Naive thymus-derived CD4-positive, alpha-beta T cell (primary cell): ENCODE measurements at regions of chr3 and their contacts with region 1.

Region 1: GRCh38 chr3:16482770-16483531 is 30.5 kb downstream of the RFTN1 start:
- DNase-seq: peak in 8 of 9 donors; percentile 14 to 49 (median 43)
- ATAC-seq: peak; percentile 87
- H3K4me3 ChIP-seq: no peak overlapping the region
- H3K4me3 Mint-ChIP-seq: peak overlapping the region; percentile 61 to 90 (median 76)
- H3K27ac ChIP-seq: peak overlapping the region; percentile 72
- H3K27ac Mint-ChIP-seq: peak overlapping the region; percentile 80 to 99 (median 91)
- H3K4me1 ChIP-seq: peaks cover 27 to 61% of the 10 kb centered on the region in 2 donors
- H3K4me1 Mint-ChIP-seq: peaks cover 47 to 88% (median 80%) of the 10 kb centered on the region in 7 donors
- H3K27me3 ChIP-seq: no peaks in the 10 kb centered on the region
- H3K27me3 Mint-ChIP-seq: no peaks in the 10 kb centered on the region

Region 2: GRCh38 chr3:16378920-16379319 is 104.0 kb before region 1 on chr3:
- CTCF ChIA-PET with region 1: no interaction called
- POLR2A ChIA-PET with region 1: interaction called, 4 read pairs
- intact Hi-C with region 1: loop called in 1 of 2 experiments (anchors 5 kb)
- DNase-seq: no peak
- ATAC-seq: peak; percentile 19
- H3K4me3 ChIP-seq: no peak overlapping the region
- H3K4me3 Mint-ChIP-seq: peak overlapping the region in 8 of 10 donors; percentile 26 to 85 (median 42)
- H3K27ac ChIP-seq: no peak overlapping the region
- H3K27ac Mint-ChIP-seq: peak overlapping the region in 8 of 9 donors; percentile 54 to 94 (median 90)
- H3K4me1 ChIP-seq: peaks cover 28 to 60% of the 10 kb centered on the region in 2 donors
- H3K4me1 Mint-ChIP-seq: peaks cover 52 to 98% (median 87%) of the 10 kb centered on the region in 7 donors
- H3K27me3 ChIP-seq: no peaks in the 10 kb centered on the region
- H3K27me3 Mint-ChIP-seq: no peaks in the 10 kb centered on the region

Region 3: GRCh38 chr3:16467393-16467792 is 15.6 kb before region 1 on chr3:
- CTCF ChIA-PET with region 1: no interaction called
- POLR2A ChIA-PET with region 1: interaction called, 5 read pairs
- intact Hi-C with region 1: loop called (anchors 1 kb)
- DNase-seq: peak in 8 of 9 donors; percentile 14 to 77 (median 39)
- ATAC-seq: peak; percentile 80
- H3K4me3 ChIP-seq: no peak overlapping the region
- H3K4me3 Mint-ChIP-seq: peak overlapping the region; percentile 68 to 86 (median 79)
- H3K27ac ChIP-seq: peak overlapping the region; percentile 68
- H3K27ac Mint-ChIP-seq: peak overlapping the region; percentile 49 to 99 (median 95)
- H3K4me1 ChIP-seq: peaks cover 6 to 44% of the 10 kb centered on the region in 2 donors
- H3K4me1 Mint-ChIP-seq: peaks cover 55 to 84% (median 67%) of the 10 kb centered on the region in 7 donors
- H3K27me3 ChIP-seq: no peaks in the 10 kb centered on the region
- H3K27me3 Mint-ChIP-seq: no peaks in the 10 kb centered on the region

Region 4: DNA sequence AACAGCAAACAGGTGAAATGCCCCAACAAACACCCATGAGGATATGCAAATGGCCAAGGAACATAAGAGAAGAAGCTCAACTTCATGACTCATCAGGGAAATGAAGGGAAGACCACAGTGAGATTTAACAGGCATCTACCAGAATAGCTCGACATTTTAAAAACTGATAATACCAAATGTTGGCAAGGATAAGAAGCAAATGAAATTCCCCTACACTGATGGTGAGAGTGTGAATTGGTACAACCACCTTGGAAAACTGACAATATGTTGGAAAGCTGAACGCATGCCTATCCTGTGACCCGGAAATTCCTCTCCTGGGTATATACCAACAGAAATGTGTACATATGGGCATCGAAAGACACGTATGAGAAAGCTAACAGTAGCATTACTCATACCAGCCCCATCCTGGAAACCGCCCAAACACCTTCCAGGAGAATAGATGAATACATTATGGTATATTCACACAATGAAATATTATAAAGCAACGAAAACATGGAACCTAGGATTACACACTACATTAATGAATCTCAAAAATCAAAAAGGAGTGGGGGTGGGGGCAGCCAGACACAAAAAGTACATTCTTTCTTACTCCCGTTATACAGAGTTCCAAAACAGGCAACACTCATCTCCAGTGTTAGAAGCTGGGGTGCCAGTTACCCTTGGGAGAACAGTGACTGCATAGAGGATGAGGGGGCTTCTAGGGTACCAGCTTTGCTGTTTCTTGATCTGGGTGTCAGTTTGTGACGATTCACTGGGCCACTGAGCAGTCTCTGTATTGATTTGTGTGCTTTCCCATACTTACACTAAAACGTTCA is 13.7 kb after region 1 on chr3:
- CTCF ChIA-PET with region 1: interaction called, 4 read pairs
- POLR2A ChIA-PET with region 1: interaction called, 29 read pairs
- intact Hi-C with region 1: loop called in 1 of 2 experiments (anchors 2 kb)
- DNase-seq: no peak
- ATAC-seq: peak; percentile 41
- H3K4me3 ChIP-seq: no peak overlapping the region
- H3K4me3 Mint-ChIP-seq: peak overlapping the region in 9 of 10 donors; percentile 41 to 71 (median 51)
- H3K27ac ChIP-seq: no peak overlapping the region
- H3K27ac Mint-ChIP-seq: peak overlapping the region; percentile 1 to 87 (median 60)
- H3K4me1 ChIP-seq: peaks cover 40 to 41% of the 10 kb centered on the region in 2 donors
- H3K4me1 Mint-ChIP-seq: peaks cover 51 to 77% (median 65%) of the 10 kb centered on the region in 7 donors
- H3K27me3 ChIP-seq: no peaks in the 10 kb centered on the region
- H3K27me3 Mint-ChIP-seq: no peaks in the 10 kb centered on the region

Region 5: GRCh38 chr3:16741103-16741758 is 258.3 kb after region 1 on chr3:
- CTCF ChIA-PET with region 1: no interaction called
- POLR2A ChIA-PET with region 1: no interaction called
- intact Hi-C with region 1: no loop called
- DNase-seq: no peak
- ATAC-seq: no peak
- H3K4me3 ChIP-seq: no peak overlapping the region
- H3K4me3 Mint-ChIP-seq: no peak overlapping the region
- H3K27ac ChIP-seq: no peak overlapping the region
- H3K27ac Mint-ChIP-seq: no peak overlapping the region
- H3K4me1 ChIP-seq: no peaks in the 10 kb centered on the region
- H3K4me1 Mint-ChIP-seq: no peaks in the 10 kb centered on the region
- H3K27me3 ChIP-seq: no peaks in the 10 kb centered on the region
- H3K27me3 Mint-ChIP-seq: no peaks in the 10 kb centered on the region

Region 6: GRCh38 chr3:16849229-16849628 is 366.3 kb after region 1 on chr3:
- CTCF ChIA-PET with region 1: no interaction called
- POLR2A ChIA-PET with region 1: no interaction called
- intact Hi-C with region 1: loop called in 1 of 2 experiments (anchors 10 kb)
- DNase-seq: peak; percentile 20 to 74 (median 59)
- ATAC-seq: peak; percentile 89
- H3K4me3 ChIP-seq: peak overlapping the region; percentile 14
- H3K4me3 Mint-ChIP-seq: peak overlapping the region; percentile 43 to 85 (median 79)
- H3K27ac ChIP-seq: peak overlapping the region; percentile 54
- H3K27ac Mint-ChIP-seq: peak overlapping the region; percentile 69 to 92 (median 83)
- H3K4me1 ChIP-seq: peaks cover 24 to 43% of the 10 kb centered on the region in 2 donors
- H3K4me1 Mint-ChIP-seq: peaks cover 29 to 61% (median 56%) of the 10 kb centered on the region in 7 donors
- H3K27me3 ChIP-seq: no peaks in the 10 kb centered on the region
- H3K27me3 Mint-ChIP-seq: peaks cover 0 to 8% (median 0%) of the 10 kb centered on the region in 5 donors